Calu3 (cell line): ENCODE measurements at regions of chr7 and their contacts with region 1.

Region 1: GRCh38 chr7:141072548-141073172 is 1.2 kb upstream of the TMEM178B start:
- DNase-seq: peak; percentile 35
- H3K4me3 Mint-ChIP-seq: peak overlapping the region; percentile 72
- H3K27ac Mint-ChIP-seq: no peak overlapping the region
- H3K4me1 Mint-ChIP-seq: peaks cover 9% of the 10 kb centered on the region
- H3K27me3 Mint-ChIP-seq: peaks cover 49% of the 10 kb centered on the region
- CTCF ChIP-seq: no peak

Region 2: GRCh38 chr7:141161550-141162535 is 89.2 kb after region 1 on chr7:
- CTCF ChIA-PET with region 1: interaction called, 3 read pairs
- intact Hi-C with region 1: loop called (anchors 5 kb)
- DNase-seq: peak; percentile 69
- H3K4me3 Mint-ChIP-seq: peak overlapping the region; percentile 4
- H3K27ac Mint-ChIP-seq: peak overlapping the region; percentile 42
- H3K4me1 Mint-ChIP-seq: peaks cover 61% of the 10 kb centered on the region
- H3K27me3 Mint-ChIP-seq: no peaks in the 10 kb centered on the region
- CTCF ChIP-seq: no peak

Region 3: GRCh38 chr7:141220263-141220880 is 147.7 kb after region 1 on chr7:
- CTCF ChIA-PET with region 1: no interaction called
- intact Hi-C with region 1: loop called (anchors 5 kb)
- DNase-seq: peak; percentile 6
- H3K4me3 Mint-ChIP-seq: no peak overlapping the region
- H3K27ac Mint-ChIP-seq: no peak overlapping the region
- H3K4me1 Mint-ChIP-seq: no peaks in the 10 kb centered on the region
- H3K27me3 Mint-ChIP-seq: no peaks in the 10 kb centered on the region
- CTCF ChIP-seq: no peak

Region 4: GRCh38 chr7:141533149-141533949 is 460.7 kb after region 1 on chr7:
- CTCF ChIA-PET with region 1: no interaction called
- intact Hi-C with region 1: loop called (anchors 2 kb)
- DNase-seq: peak; percentile 62
- H3K4me3 Mint-ChIP-seq: no peak overlapping the region
- H3K27ac Mint-ChIP-seq: no peak overlapping the region
- H3K4me1 Mint-ChIP-seq: no peaks in the 10 kb centered on the region
- H3K27me3 Mint-ChIP-seq: peaks cover 25% of the 10 kb centered on the region
- CTCF ChIP-seq: peak; percentile 85

Region 5: GRCh38 chr7:141654551-141654950 is 581.9 kb after region 1 on chr7:
- CTCF ChIA-PET with region 1: no interaction called
- intact Hi-C with region 1: loop called (anchors 5 kb)
- DNase-seq: peak; percentile 71
- H3K4me3 Mint-ChIP-seq: no peak overlapping the region
- H3K27ac Mint-ChIP-seq: peak overlapping the region; percentile 44
- H3K4me1 Mint-ChIP-seq: peaks cover 6% of the 10 kb centered on the region
- H3K27me3 Mint-ChIP-seq: no peaks in the 10 kb centered on the region
- CTCF ChIP-seq: peak; percentile 68